Activated CD8-positive, alpha-beta T cell treated with anti-CD3 and anti-CD28 coated beads for 36 hours (primary cell): ENCODE measurements at regions of chr1 and their contacts with region 1.

Region 1: GRCh38 chr1:229227298-229227919 is 43.5 kb upstream of the RAB4A start:
- DNase-seq: peak; percentile 85
- ATAC-seq: peak; percentile 80
- H3K4me3 Mint-ChIP-seq: no peak overlapping the region
- H3K27ac Mint-ChIP-seq: peak overlapping the region; percentile 12
- H3K4me1 Mint-ChIP-seq: peaks cover 14% of the 10 kb centered on the region
- H3K27me3 Mint-ChIP-seq: peaks cover 2% of the 10 kb centered on the region
- CTCF ChIP-seq: peak; percentile 98

Region 2: GRCh38 chr1:228664399-228664914 is 563.0 kb before region 1 on chr1:
- CTCF ChIA-PET with region 1: interaction called, 53 read pairs
- POLR2A ChIA-PET with region 1: no interaction called
- intact Hi-C with region 1: loop called (anchors 1 kb)
- DNase-seq: peak; percentile 88
- ATAC-seq: peak; percentile 30
- H3K4me3 Mint-ChIP-seq: no peak overlapping the region
- H3K27ac Mint-ChIP-seq: no peak overlapping the region
- H3K4me1 Mint-ChIP-seq: no peaks in the 10 kb centered on the region
- H3K27me3 Mint-ChIP-seq: peaks cover 3% of the 10 kb centered on the region
- CTCF ChIP-seq: peak; percentile 91

Region 3: GRCh38 chr1:228702433-228702832 is 525.0 kb before region 1 on chr1:
- CTCF ChIA-PET with region 1: interaction called, 10 read pairs
- POLR2A ChIA-PET with region 1: no interaction called
- intact Hi-C with region 1: no loop called
- DNase-seq: no peak
- ATAC-seq: no peak
- H3K4me3 Mint-ChIP-seq: no peak overlapping the region
- H3K27ac Mint-ChIP-seq: no peak overlapping the region
- H3K4me1 Mint-ChIP-seq: no peaks in the 10 kb centered on the region
- H3K27me3 Mint-ChIP-seq: no peaks in the 10 kb centered on the region
- CTCF ChIP-seq: no peak

Region 4: GRCh38 chr1:229102741-229103391 is 124.5 kb before region 1 on chr1:
- CTCF ChIA-PET with region 1: no interaction called
- POLR2A ChIA-PET with region 1: no interaction called
- intact Hi-C with region 1: no loop called
- DNase-seq: no peak
- ATAC-seq: no peak
- H3K4me3 Mint-ChIP-seq: no peak overlapping the region
- H3K27ac Mint-ChIP-seq: no peak overlapping the region
- H3K4me1 Mint-ChIP-seq: no peaks in the 10 kb centered on the region
- H3K27me3 Mint-ChIP-seq: no peaks in the 10 kb centered on the region
- CTCF ChIP-seq: no peak

Region 5: DNA sequence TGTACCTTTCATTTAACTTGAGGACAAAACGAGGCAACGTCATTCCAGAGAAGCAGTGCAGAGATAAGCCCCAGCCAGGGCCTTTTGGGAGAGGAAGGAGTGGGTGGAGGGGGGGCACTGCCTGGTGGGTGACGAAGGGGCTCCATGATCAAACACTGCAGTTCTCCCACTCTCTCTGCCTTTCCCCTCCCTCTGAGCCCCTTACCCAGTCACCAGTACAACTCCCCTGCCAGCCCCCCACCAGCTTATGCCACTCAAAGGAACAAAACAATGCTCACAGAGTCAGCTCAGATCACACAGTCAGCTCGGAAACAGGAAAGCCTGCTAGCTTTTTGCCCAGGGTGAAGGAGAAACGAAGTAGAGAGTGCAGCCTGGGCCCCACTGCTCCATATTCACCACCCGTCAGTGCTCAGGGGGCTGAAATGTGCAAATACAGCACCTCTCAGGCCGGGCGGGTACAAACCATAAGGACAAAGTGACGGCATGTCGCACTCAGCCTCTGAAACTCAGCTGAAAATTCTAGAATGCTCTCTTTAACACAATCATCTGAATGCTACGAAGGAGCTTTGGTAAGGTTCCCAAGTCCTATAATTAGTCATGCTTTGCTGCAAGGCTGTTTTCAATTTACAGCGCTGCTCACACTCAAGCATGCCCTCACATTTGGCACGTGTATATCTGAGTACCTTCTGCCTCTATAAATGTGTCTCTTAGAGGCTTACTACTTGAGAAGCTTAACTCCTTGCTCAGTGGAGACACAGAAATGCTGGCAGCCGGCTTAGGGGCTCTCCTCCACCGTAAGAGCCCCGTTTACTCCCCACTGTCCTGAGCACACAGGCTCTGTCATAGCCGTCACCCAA is 22.3 kb before region 1 on chr1:
- CTCF ChIA-PET with region 1: interaction called, 10 read pairs
- POLR2A ChIA-PET with region 1: no interaction called
- intact Hi-C with region 1: no loop called
- DNase-seq: peak; percentile 36
- ATAC-seq: peak; percentile 55
- H3K4me3 Mint-ChIP-seq: no peak overlapping the region
- H3K27ac Mint-ChIP-seq: peak overlapping the region; percentile 76
- H3K4me1 Mint-ChIP-seq: peaks cover 17% of the 10 kb centered on the region
- H3K27me3 Mint-ChIP-seq: no peaks in the 10 kb centered on the region
- CTCF ChIP-seq: no peak

Region 6: DNA sequence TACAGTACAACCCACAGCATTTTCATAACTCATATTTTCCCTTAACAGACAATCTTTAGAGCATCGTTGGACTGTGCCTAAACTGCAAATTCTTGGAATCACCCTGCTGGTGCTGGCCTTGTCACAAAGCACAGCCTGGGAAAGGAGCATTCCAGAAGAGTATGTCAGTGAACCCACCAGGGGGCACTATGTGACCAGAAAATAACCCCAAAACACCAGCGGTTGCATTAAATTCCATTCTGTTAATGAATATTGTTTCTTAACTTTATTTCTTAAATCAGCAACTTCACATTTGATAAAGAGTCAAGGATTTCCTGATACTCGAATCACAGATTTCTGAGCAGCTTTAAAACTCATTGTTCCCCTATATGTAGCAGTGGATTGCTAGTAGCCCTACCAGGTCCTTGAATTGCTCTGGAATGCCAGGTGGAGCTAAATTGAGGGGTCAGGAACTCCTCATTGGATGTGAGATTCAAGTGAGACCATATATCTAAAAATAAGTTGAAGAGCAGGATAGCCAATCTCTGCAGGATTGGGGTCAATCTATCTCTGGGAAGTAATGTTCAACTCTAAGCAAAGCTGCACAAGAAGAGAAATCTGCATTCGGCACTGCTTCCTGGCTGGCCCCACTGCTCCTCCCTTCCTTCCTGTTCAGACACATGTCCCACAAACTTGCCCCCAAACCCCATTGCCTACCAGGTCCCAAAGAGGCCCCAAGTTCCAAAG is 30.8 kb after region 1 on chr1:
- CTCF ChIA-PET with region 1: interaction called, 23 read pairs
- POLR2A ChIA-PET with region 1: interaction called, 3 read pairs
- intact Hi-C with region 1: no loop called
- DNase-seq: peak; percentile 71
- ATAC-seq: peak; percentile 26
- H3K4me3 Mint-ChIP-seq: no peak overlapping the region
- H3K27ac Mint-ChIP-seq: no peak overlapping the region
- H3K4me1 Mint-ChIP-seq: peaks cover 26% of the 10 kb centered on the region
- H3K27me3 Mint-ChIP-seq: no peaks in the 10 kb centered on the region
- CTCF ChIP-seq: peak; percentile 96

Region 7: GRCh38 chr1:229470406-229471043 is 243.1 kb after region 1 on chr1:
- CTCF ChIA-PET with region 1: no interaction called
- POLR2A ChIA-PET with region 1: no interaction called
- intact Hi-C with region 1: no loop called
- DNase-seq: no peak
- ATAC-seq: no peak
- H3K4me3 Mint-ChIP-seq: no peak overlapping the region
- H3K27ac Mint-ChIP-seq: no peak overlapping the region
- H3K4me1 Mint-ChIP-seq: no peaks in the 10 kb centered on the region
- H3K27me3 Mint-ChIP-seq: no peaks in the 10 kb centered on the region
- CTCF ChIP-seq: no peak